ENCODE measurements at regions of chr6 and their contacts with region 1.

Region 1: GRCh38 chr6:116969211-116969863 is 92.3 kb downstream of the RFX6 start:
- DNase-seq: no peak
- H3K4me3 ChIP-seq: no peak overlapping the region
- H3K27ac ChIP-seq: no peak overlapping the region
- H3K4me1 ChIP-seq: no peaks in the 10 kb centered on the region
- H3K27me3 ChIP-seq: peaks cover 0 to 12% (median 0%) of the 10 kb centered on the region in 7 donors
- CTCF ChIP-seq: peak in 8 of 11 experiments; percentile 17 to 61 (median 45)
- POLR2A ChIP-seq: no peak

Region 2: GRCh38 chr6:116611056-116611455 is 358.3 kb before region 1 on chr6:
- intact Hi-C with region 1: no loop called
- DNase-seq: no peak
- H3K4me3 ChIP-seq: no peak overlapping the region
- H3K27ac ChIP-seq: no peak overlapping the region
- H3K4me1 ChIP-seq: peaks cover 0 to 9% (median 7%) of the 10 kb centered on the region in 6 donors
- H3K27me3 ChIP-seq: no peaks in the 10 kb centered on the region
- CTCF ChIP-seq: no peak
- POLR2A ChIP-seq: no peak

Region 3: GRCh38 chr6:116797585-116797984 is 171.8 kb before region 1 on chr6:
- intact Hi-C with region 1: loop called (anchors 10 kb)
- DNase-seq: no peak
- H3K4me3 ChIP-seq: no peak overlapping the region
- H3K27ac ChIP-seq: no peak overlapping the region
- H3K4me1 ChIP-seq: no peaks in the 10 kb centered on the region
- H3K27me3 ChIP-seq: peaks cover 0 to 9% (median 0%) of the 10 kb centered on the region in 7 donors
- CTCF ChIP-seq: no peak
- POLR2A ChIP-seq: no peak

Region 4: DNA sequence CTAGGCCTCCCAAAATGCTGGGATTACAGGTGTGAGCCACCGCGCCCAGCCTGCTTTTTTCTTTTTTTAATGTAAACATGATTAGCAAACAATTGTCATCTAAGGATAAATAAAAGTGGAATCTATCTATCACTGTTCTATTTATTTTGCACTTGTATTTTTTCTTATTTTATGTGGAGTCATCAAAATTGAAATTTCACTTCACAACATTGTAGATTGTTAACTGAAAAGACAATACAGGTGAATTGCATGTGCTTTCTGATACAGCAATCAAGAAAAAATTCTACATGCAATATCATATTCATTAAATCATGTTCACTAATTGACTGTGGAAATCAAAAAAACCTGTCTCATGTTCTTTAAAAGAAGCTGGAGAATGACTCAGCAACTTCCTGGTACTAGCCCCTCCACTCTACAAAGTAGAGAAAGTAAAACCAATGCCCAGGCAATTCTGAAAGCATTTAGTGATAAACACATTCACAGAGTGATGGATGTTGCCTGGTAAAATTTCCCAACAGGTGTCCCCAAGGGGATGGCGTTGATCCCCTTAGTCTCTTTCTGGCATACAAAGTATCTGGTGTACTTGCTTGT is 103.0 kb before region 1 on chr6:
- intact Hi-C with region 1: no loop called
- DNase-seq: no peak
- H3K4me3 ChIP-seq: no peak overlapping the region
- H3K27ac ChIP-seq: no peak overlapping the region
- H3K4me1 ChIP-seq: no peaks in the 10 kb centered on the region
- H3K27me3 ChIP-seq: no peaks in the 10 kb centered on the region
- CTCF ChIP-seq: no peak
- POLR2A ChIP-seq: no peak

Measured in spleen (tissue), 13 donors.